Dorsolateral prefrontal cortex (tissue), 120 donors: ENCODE measurements at regions of chr16 and their contacts with region 1.

Region 1: GRCh38 chr16:53773150-53773846 is 69.3 kb downstream of the FTO start:
- DNase-seq: peak in 2 of 10 donors; percentile 18 to 34
- H3K4me3 ChIP-seq: no peak overlapping the region
- H3K27ac ChIP-seq: peak overlapping the region in 1 of 59 donors; percentile 20
- H3K27me3 ChIP-seq: no peaks in the 10 kb centered on the region
- CTCF ChIP-seq: peak; percentile 19 to 86 (median 66)

Region 2: GRCh38 chr16:53848277-53848942 is 75.1 kb after region 1 on chr16:
- intact Hi-C with region 1: loop called in 1 of 2 experiments (anchors 5 kb)
- DNase-seq: no peak
- H3K4me3 ChIP-seq: no peak overlapping the region
- H3K27ac ChIP-seq: no peak overlapping the region
- H3K27me3 ChIP-seq: no peaks in the 10 kb centered on the region
- CTCF ChIP-seq: no peak

Region 3: GRCh38 chr16:53892155-53892554 is 118.9 kb after region 1 on chr16:
- intact Hi-C with region 1: loop called (anchors 5 to 10 kb)
- DNase-seq: peak in 7 of 10 donors; percentile 30 to 71 (median 48)
- H3K4me3 ChIP-seq: no peak overlapping the region
- H3K27ac ChIP-seq: no peak overlapping the region
- H3K27me3 ChIP-seq: no peaks in the 10 kb centered on the region
- CTCF ChIP-seq: peak; percentile 68 to 91 (median 82)

Region 4: DNA sequence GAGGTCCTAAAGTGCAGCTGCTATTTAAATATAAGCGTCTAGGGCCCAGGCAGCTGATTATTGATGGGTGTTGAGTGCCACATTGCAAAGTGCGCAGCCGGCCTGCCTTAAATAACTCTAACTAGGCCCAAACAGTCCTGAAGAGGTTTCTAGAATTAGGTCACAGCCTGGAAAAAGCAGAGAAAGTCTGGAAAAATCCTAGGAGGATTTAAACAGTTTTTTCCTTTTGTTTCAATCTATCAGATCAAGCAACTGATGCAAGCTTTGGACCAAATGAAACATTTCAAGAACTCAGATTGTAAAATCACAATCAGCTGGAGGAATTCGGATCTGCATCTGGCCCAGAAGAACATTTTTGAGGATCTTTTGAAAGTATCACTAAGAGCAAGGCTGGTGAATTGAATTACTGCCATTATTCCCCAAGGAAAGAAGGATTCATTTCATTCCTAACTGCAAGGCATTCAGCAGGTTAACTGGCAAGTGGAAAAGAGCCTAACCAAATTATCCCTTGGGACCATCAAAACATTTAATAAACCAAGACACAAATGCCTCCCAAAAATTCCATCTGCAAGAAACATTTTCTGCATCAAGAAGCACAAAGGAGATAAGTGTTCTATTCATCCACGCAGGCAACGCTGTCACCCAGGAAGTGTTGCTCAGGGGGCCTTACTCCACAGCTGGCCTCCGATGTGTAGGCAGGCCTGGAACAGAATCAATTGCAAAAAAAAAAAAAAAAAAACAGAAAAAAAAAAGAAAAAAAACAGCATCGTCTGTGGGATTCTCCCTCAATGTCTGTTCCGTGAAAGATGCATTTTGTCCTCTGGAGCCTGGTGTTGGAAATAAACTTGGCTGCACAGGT is 467.2 kb after region 1 on chr16:
- intact Hi-C with region 1: no loop called
- DNase-seq: peak in 2 of 10 donors; percentile 14 to 30
- H3K4me3 ChIP-seq: no peak overlapping the region
- H3K27ac ChIP-seq: peak overlapping the region in 17 of 59 donors; percentile 7 to 66 (median 36)
- H3K27me3 ChIP-seq: peaks cover 0 to 10% (median 0%) of the 10 kb centered on the region in 45 donors
- CTCF ChIP-seq: no peak

Region 5: DNA sequence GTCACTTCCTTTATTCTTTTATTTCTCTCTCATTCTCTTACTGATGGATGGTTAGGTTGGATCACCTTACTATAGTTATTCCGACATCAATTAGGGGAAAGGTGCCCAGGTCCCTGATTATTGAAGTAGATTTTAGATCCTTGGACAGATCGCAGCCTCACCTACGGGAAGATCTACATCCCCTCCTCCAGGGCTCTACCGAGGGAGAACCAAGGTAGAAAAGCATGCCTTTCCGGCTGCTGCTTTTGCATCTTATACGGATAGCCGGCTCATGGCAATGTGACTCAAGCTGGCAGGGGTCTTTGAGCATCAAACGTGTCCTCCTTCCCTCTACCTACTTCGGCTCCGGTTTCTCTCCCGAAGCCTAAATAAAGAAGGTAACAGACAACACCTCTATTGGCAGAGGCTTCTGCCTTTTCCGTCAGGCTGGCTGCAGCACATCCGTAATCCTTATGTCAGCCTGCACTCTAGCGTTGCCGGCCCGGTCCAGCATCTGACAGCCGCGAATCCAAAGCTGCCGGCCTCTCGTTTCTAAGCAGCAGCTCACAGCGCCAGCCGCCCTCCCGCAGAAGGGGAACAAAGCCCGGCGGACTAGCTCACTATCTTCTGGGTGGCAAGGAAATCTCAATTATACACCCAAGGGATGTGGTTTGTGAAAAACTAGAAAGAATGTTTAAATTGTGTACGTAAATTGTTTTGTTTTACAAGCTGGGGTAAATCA is 1597.6 kb after region 1 on chr16:
- intact Hi-C with region 1: loop called in 1 of 2 experiments (anchors 10 kb)
- DNase-seq: peak; percentile 55 to 88 (median 78)
- H3K4me3 ChIP-seq: peak overlapping the region in 46 of 59 donors; percentile 0 to 54 (median 31)
- H3K27ac ChIP-seq: no peak overlapping the region
- H3K27me3 ChIP-seq: peaks cover 0 to 47% (median 16%) of the 10 kb centered on the region in 45 donors
- CTCF ChIP-seq: peak in 54 of 56 donors; percentile 29 to 77 (median 60)